ENCODE measurements at regions of chr1 and their contacts with region 1.

Region 1: DNA sequence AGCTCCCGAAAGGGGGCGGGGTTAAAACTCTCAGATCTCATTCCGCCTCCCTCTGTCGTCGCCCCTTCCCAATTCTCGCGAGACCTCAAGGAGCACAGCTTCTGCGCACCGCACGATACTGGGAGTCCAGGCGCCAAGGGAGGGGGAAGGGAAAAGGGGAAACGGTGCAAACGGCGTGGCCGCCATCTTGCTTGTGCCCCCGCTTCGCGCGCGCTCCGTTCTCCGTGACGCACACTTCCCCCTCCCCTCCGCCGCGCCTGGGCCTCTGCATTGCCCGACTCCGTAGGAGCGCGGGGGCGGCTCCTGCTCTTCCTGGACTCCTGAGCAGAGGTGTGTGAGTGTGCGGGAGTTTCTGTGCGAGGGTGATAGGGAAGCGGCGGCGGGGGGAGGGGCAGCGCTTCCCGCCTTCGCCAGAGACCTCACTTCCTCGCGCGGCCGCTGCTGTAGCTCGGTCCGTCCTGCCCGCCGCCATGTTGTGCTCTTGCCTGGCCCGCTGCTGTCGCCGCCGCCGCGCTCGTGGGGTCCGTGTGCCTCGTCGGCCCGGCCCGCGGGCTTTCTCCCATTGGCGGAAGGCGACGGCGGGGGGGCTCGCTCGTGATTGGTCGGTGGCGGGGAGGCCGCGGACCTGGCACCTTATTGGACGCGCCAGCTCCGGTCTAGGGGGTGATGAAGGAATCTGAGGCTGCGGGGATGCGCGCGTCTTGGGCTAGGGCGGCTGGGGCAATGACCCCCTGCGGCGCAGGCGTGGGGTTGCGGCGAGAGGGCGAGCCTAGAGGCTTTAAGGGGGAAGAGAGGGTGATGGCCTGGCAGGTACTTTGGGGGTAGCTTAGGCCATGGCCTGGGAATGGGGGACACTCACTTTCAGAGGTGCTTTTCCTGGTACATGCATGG is at the start of gene NFYC:
- DNase-seq: peak; percentile 97
- H3K4me3 Mint-ChIP-seq: peak within 1 kb of the TSS; percentile 90
- H3K27ac Mint-ChIP-seq: peak within 1 kb of the TSS; percentile 93
- H3K4me1 Mint-ChIP-seq: peaks cover 57% of the 10 kb centered on the region
- H3K27me3 Mint-ChIP-seq: no peaks in the 10 kb centered on the region
- total RNA-seq, gene NFYC: 78.7 to 84.1 TPM

Region 2: DNA sequence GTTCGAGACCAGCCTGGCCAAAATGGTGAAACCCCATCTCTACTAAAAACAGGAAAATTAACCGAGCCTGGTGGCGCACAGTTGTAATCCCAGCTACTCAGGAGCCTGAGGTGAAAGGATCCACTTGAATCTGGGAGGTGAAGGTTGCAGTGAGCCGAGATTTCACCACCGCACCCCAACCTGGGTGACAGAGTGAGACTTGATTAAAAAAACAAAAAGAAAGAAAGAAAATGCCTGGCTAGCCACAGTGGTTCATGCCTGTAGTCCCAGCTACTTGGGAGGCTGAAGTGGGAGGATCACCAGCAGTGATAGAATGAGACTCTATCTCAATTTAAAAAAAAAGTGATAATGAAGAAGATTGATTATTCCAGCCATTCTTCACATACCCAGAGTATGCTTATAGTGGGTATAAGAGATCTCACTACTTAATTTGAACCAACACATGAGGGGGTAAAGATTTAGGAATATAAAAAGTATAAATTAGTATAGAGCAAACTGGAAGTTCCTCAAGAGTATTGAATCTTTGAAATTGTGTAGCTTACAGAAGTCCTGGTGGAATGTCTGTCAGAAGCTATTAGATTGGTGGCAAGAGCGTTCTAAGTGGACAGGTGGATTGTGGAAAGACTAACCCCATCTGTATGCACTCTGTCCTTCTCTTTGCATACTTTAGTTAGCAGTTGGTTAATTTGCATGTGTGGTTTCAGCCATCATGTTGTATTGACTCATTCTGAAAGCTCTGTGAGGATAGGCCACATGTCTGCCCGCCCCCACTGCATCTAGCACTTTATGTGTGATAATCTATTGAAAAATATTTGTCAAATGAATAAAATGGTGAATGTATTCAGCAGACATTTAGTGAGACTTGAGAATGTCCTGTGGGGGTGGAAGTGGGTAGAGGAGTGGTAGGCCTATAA is 505.6 kb before region 1 on chr1:
- CTCF ChIA-PET with region 1: no interaction called
- POLR2A ChIA-PET with region 1: no interaction called
- DNase-seq: peak; percentile 63
- H3K4me3 Mint-ChIP-seq: no peak overlapping the region
- H3K27ac Mint-ChIP-seq: peak overlapping the region; percentile 50
- H3K4me1 Mint-ChIP-seq: peaks cover 48% of the 10 kb centered on the region
- H3K27me3 Mint-ChIP-seq: no peaks in the 10 kb centered on the region

Region 3: GRCh38 chr1:40373338-40374283 is 318.2 kb before region 1 on chr1 and contains the start of gene SMAP2:
- CTCF ChIA-PET with region 1: no interaction called
- POLR2A ChIA-PET with region 1: interaction called, 11 read pairs
- DNase-seq: peak; percentile 96
- H3K4me3 Mint-ChIP-seq: peak within 1 kb of the TSS; percentile 99
- H3K27ac Mint-ChIP-seq: peak within 1 kb of the TSS; percentile 99
- H3K4me1 Mint-ChIP-seq: peaks cover 49% of the 10 kb centered on the region
- H3K27me3 Mint-ChIP-seq: no peaks in the 10 kb centered on the region
- total RNA-seq, gene SMAP2: 172 to 173 TPM

Region 4: GRCh38 chr1:40676501-40676900 is 15.3 kb before region 1 on chr1:
- CTCF ChIA-PET with region 1: no interaction called
- POLR2A ChIA-PET with region 1: interaction called, 17 read pairs
- DNase-seq: no peak
- H3K4me3 Mint-ChIP-seq: no peak overlapping the region
- H3K27ac Mint-ChIP-seq: no peak overlapping the region
- H3K4me1 Mint-ChIP-seq: no peaks in the 10 kb centered on the region
- H3K27me3 Mint-ChIP-seq: peaks cover 4% of the 10 kb centered on the region

Region 5: DNA sequence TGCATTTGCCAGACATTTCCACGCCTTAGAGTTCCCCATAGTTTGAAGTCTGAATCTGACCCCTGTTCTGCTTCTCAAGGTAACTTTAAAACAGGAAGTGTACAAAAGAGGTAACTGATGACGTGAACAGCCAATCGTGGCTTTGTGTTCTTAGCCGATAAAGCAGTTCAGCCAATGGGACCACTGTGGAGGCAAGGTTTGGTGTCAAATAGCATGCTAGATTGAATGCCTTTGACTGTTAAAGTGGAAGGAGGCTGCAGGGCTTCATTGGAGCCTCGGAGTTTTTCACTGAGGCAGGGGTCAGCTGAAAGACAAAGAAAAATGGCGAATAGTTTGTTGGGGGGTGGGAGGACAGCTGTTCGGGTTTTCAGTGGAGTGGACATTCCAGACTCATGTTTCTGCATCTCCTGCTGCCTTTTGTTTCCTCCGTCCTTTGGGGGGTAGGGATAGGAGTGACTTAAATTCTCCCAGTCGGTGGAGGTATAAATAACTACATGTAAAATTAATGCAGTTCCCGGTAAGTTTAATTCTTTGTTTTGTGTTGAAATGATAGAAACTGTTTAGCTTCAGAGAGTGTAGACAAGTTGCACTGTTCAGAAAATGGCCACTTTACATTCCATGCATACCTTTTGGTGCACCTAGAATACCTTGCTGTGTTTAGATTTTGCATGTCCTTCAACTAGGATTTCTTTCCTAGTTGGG is 17.5 kb after region 1 on chr1:
- CTCF ChIA-PET with region 1: interaction called, 11 read pairs
- POLR2A ChIA-PET with region 1: interaction called, 134 read pairs
- DNase-seq: peak; percentile 79
- H3K4me3 Mint-ChIP-seq: peak overlapping the region; percentile 86
- H3K27ac Mint-ChIP-seq: peak overlapping the region; percentile 89
- H3K4me1 Mint-ChIP-seq: peaks cover 65% of the 10 kb centered on the region
- H3K27me3 Mint-ChIP-seq: no peaks in the 10 kb centered on the region

Region 6: GRCh38 chr1:40753142-40753882 is 61.5 kb after region 1 on chr1:
- CTCF ChIA-PET with region 1: no interaction called
- POLR2A ChIA-PET with region 1: interaction called, 16 read pairs
- DNase-seq: no peak
- H3K4me3 Mint-ChIP-seq: no peak overlapping the region
- H3K27ac Mint-ChIP-seq: peak overlapping the region; percentile 11
- H3K4me1 Mint-ChIP-seq: peaks cover 27% of the 10 kb centered on the region
- H3K27me3 Mint-ChIP-seq: no peaks in the 10 kb centered on the region

Region 7: DNA sequence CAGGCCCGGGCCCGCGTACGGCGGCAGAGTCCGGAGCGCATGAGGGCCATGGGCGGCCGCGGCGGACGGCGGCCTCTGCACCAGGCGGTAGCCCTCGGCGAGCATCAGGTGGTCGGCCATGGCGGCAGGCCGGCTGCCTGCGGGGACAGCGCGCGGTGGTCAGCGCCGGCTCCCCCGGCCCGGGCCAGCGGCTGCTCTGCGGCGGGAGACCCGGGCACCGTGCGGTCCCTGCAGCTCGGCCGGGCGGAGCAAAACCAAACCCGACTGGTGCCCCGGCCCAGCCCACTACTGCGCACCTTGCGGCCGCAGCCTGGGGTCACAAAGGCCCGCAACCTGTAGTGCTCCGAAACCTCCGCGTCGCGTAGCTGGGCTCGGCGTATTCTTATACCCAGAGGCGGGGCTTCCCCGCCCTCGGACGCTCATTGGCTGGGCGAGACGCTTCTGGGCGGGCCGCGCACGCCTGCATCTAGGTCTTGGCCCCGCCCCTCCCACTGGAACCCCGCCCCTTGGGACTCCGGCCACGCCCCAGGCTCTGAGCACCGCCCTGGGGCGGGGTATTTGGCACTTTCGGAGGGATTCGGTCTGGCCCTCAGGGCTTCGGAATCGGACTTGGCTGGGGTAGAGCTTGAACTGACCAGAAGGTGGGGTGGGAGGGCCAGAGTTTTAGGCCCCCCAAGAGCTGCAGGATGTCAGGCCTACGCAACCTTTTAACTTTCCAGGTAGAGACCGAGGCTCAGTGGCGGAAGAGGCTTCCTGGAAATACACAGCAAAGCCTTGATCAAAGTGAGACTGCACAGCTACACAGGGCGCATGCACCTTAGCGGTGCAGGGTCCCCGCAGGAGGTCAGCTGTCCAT is 170.5 kb after region 1 on chr1 and contains the start of gene CITED4:
- CTCF ChIA-PET with region 1: interaction called, 3 read pairs
- POLR2A ChIA-PET with region 1: interaction called, 26 read pairs
- DNase-seq: peak; percentile 96
- H3K4me3 Mint-ChIP-seq: peak within 1 kb of the TSS; percentile 82
- H3K27ac Mint-ChIP-seq: peak within 1 kb of the TSS; percentile 95
- H3K4me1 Mint-ChIP-seq: peaks cover 33% of the 10 kb centered on the region
- H3K27me3 Mint-ChIP-seq: peaks cover 31% of the 10 kb centered on the region
- total RNA-seq, gene CITED4: 6.9 to 7.9 TPM

Region 8: DNA sequence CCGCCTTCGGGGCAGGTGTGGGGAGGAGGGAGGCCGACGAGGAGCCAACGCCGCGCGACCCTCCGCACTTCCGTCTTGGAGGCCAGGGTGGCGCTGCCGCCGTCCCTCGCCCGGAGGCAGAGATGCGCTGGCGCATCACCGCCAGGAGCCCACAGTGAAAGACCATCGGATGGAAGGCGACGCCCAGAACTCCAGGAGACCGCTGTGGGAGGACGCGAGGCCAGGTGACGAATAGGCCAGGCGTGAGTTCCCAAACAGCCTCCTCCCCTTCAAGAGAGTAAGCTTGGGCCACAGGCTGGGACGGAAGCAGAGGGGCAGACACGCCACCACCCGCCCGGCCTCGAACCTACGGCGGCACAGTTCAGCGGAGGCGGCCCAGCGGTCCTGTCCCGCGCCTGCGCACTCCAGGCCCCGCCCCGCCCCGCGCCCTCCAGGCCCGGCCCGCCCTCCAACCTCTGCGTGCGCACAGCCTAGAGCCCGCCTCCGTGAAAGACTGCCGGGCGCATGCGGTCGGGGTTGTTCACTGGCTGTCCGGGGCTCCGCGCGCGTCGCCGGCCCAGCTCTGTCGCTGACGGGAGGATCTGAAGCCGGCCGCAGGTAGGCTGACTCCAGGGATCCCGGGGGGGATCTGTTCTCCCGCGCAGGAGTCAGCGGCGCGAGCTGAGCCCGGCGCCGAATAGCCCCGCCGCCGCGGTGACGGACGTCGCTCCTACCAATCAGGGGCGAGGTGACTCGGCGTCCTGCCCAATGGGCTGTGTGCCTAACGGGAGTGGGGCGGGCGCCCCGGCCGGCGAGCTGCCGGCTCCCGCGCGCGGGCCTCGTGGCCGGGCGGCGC is 287.7 kb after region 1 on chr1 and contains the start of gene CTPS1:
- CTCF ChIA-PET with region 1: no interaction called
- POLR2A ChIA-PET with region 1: interaction called, 45 read pairs
- DNase-seq: peak; percentile 96
- H3K4me3 Mint-ChIP-seq: peak within 1 kb of the TSS; percentile 82
- H3K27ac Mint-ChIP-seq: peak within 1 kb of the TSS; percentile 87
- H3K4me1 Mint-ChIP-seq: peaks cover 40% of the 10 kb centered on the region
- H3K27me3 Mint-ChIP-seq: peaks cover 1% of the 10 kb centered on the region
- total RNA-seq, gene CTPS1: 41.7 to 42.2 TPM

Measured in activated CD4-positive, alpha-beta memory T cell treated with anti-CD3 and anti-CD28 coated beads, Interleukin-2, amount 10 ng/mL, durations not matched to agents 7 days and 5 days (primary cell).